ENCODE measurements at regions of chr4 and their contacts with region 1.

Region 1: DNA sequence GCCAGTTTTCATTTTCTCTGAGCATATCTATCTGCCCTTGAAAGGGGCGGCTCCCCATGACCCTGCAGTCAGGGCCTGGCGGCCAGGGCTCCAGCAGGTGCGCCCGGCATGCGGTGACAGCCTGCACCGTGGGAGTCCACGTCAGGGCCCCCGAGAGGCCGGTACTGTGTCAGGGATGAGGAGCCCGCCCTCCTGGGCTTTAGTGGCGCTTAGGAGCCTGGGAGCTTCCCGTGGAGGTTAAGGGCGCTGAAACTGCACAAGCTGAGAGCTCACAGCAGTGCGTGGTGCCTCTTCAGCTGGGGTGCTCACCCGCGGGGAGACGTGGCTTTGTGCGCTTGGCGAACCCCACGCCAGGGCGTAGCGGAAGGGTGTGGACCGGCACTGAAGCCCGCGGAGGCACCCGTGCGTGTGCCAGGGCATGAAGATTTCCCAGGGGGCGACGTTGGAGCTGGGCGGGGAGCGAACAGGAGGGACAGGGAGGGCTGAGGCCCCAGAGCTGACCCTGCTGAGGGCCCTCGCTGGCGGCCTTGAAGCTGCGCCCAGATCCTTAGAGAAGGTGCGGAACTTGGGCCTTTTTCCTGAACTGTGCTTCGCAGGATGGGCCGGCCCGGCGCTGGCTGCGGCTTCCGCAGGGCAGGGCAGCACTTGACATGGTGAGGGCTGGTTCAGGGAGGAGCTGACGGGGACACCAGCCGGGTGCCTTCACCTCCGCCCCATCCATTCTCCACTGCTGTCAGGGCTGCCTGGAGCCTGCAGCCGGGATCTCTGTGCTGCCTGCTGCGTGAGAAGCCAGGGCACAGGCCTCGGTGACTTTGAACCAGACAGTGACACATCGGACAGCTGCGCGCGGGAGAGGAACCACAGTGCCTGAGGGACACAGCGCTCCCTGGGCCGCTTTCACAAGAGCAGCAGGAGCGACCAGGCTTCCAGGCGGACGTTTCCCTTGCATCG is 32.9 kb downstream of the HTT-AS start:
- DNase-seq: peak in 8 of 9 donors; percentile 30 to 40 (median 36)
- ATAC-seq: peak; percentile 55
- H3K4me3 ChIP-seq: peak overlapping the region; percentile 66
- H3K4me3 Mint-ChIP-seq: peak overlapping the region; percentile 83 to 98 (median 89)
- H3K27ac ChIP-seq: peak overlapping the region; percentile 54
- H3K27ac Mint-ChIP-seq: peak overlapping the region in 8 of 9 donors; percentile 43 to 88 (median 84)
- H3K4me1 ChIP-seq: peaks cover 38 to 39% of the 10 kb centered on the region in 2 donors
- H3K4me1 Mint-ChIP-seq: peaks cover 40 to 72% (median 59%) of the 10 kb centered on the region in 7 donors
- H3K27me3 ChIP-seq: no peaks in the 10 kb centered on the region
- H3K27me3 Mint-ChIP-seq: peaks cover 0 to 6% (median 0%) of the 10 kb centered on the region in 5 donors

Region 2: DNA sequence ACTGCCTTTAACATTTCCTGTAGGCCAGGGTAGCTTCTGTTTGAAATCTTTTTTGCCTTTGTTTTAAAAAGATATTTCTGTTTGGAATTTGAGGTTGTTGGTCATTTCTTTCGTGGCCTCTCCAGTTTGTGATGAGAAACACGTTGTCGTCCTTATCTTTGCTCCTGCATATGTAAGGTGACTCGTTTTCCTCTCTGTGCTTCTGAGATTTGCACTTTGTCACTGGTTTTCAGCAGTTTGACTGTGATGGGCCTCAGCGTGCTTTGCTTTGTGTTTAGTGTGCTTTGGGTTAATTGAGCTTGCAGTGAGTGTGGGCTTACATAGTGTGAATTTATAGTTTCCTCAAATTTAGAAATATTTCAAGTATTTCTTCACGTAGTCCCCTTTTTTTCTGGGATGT is 423.5 kb before region 1 on chr4:
- CTCF ChIA-PET with region 1: no interaction called
- POLR2A ChIA-PET with region 1: no interaction called
- intact Hi-C with region 1: no loop called
- DNase-seq: no peak
- ATAC-seq: no peak
- H3K4me3 ChIP-seq: no peak overlapping the region
- H3K4me3 Mint-ChIP-seq: no peak overlapping the region
- H3K27ac ChIP-seq: no peak overlapping the region
- H3K27ac Mint-ChIP-seq: peak overlapping the region in 1 of 9 donors; percentile 73
- H3K4me1 ChIP-seq: no peaks in the 10 kb centered on the region
- H3K4me1 Mint-ChIP-seq: peaks cover 10 to 66% (median 55%) of the 10 kb centered on the region in 7 donors
- H3K27me3 ChIP-seq: no peaks in the 10 kb centered on the region
- H3K27me3 Mint-ChIP-seq: no peaks in the 10 kb centered on the region

Region 3: DNA sequence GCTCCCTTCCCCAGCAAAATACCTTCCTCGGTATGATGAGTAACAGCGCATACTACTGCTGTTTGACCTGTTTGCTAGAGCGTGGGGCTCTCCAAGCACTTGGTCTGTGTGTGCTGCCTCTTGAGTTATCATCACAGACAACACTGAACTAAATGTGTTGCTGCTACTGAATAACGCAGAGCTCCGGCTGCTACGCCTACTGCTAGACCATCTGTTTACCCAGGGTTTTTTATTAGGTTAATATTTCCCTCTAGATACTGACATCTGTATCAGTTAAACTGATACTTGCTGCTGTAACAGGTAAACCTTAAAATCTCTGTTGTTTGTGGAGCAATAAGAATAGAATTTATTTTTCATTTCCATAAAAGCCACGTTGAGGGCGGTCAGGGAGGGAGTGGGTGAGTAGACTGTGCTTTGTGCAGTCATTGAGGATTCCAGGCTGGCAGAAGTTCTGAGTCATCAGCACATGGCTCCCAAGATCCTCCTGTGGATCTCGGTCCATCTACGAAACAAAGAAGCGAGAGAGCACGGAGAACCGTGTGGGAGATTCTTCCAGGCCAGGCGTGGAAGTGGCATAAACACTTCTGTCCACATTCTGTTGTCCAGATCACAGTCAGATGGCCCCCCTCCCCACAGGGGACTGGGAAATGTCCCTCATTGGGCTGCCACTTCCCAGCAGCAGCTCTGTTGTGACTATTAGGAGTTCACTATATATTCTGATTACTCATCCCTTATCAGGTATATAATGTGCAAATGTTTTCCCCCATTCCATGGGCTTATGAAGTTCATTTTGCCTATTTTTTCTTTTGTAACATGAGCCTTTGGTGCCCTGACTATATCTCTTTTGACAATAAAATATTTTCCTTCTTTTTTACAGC is 64.0 kb before region 1 on chr4:
- CTCF ChIA-PET with region 1: interaction called, 5 read pairs
- POLR2A ChIA-PET with region 1: no interaction called
- intact Hi-C with region 1: loop called (anchors 1 kb)
- DNase-seq: no peak
- ATAC-seq: no peak
- H3K4me3 ChIP-seq: no peak overlapping the region
- H3K4me3 Mint-ChIP-seq: no peak overlapping the region
- H3K27ac ChIP-seq: no peak overlapping the region
- H3K27ac Mint-ChIP-seq: no peak overlapping the region
- H3K4me1 ChIP-seq: no peaks in the 10 kb centered on the region
- H3K4me1 Mint-ChIP-seq: peaks cover 0 to 6% (median 2%) of the 10 kb centered on the region in 7 donors
- H3K27me3 ChIP-seq: no peaks in the 10 kb centered on the region
- H3K27me3 Mint-ChIP-seq: no peaks in the 10 kb centered on the region

Region 4: DNA sequence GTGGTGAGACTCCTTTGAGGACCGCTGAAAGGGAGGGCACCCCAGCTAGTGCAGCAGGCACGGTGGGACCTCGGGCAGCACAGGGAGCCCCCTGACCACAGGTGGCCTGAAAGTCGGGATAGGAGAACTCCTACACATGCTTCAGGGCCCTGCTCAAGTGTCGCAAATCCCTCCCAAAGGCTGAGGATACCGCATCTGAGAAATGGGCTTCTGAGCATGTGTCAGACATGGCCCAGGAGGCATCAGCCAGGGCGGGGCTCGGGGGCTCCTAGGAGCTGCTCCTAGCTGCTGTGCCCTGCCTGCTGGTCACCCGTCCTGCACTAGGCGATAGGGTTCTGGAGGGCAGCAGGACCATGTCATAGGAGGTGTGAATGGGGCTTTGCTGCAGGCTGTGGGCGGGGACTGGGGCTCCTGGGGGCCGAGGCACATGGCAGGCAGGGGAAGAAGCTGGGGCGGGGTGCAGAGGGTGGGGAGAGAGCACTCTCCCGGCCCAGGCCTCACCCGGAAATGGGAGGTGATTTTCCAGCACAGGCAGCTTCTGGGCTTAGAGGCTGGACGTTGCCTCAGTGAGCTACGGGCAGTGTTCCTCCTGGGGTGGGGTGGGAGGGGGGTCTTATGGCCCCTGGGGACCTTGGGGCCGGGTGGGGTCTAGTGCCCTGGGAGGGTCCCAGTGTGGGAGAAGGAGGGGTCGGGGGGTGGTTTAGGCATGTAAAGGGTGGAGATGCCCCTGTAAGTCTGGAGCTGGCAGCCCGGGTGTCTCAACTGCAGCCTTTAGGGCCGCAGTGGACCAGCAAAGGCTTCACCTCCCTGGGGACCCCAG is 589.2 kb after region 1 on chr4:
- CTCF ChIA-PET with region 1: no interaction called
- POLR2A ChIA-PET with region 1: no interaction called
- intact Hi-C with region 1: no loop called
- DNase-seq: no peak
- ATAC-seq: no peak
- H3K4me3 ChIP-seq: no peak overlapping the region
- H3K4me3 Mint-ChIP-seq: no peak overlapping the region
- H3K27ac ChIP-seq: no peak overlapping the region
- H3K27ac Mint-ChIP-seq: no peak overlapping the region
- H3K4me1 ChIP-seq: no peaks in the 10 kb centered on the region
- H3K4me1 Mint-ChIP-seq: no peaks in the 10 kb centered on the region
- H3K27me3 ChIP-seq: no peaks in the 10 kb centered on the region
- H3K27me3 Mint-ChIP-seq: peaks cover 0 to 17% (median 7%) of the 10 kb centered on the region in 5 donors